ENCODE measurements at regions of chr1 and their contacts with region 1.

Region 1: GRCh38 chr1:185670187-185670627 is 64.0 kb upstream of the HMCN1 start:
- DNase-seq: peak; percentile 28
- H3K4me3 Mint-ChIP-seq: no peak overlapping the region
- H3K27ac Mint-ChIP-seq: no peak overlapping the region
- H3K4me1 Mint-ChIP-seq: peaks cover 39% of the 10 kb centered on the region
- H3K27me3 Mint-ChIP-seq: peaks cover 2% of the 10 kb centered on the region

Region 2: DNA sequence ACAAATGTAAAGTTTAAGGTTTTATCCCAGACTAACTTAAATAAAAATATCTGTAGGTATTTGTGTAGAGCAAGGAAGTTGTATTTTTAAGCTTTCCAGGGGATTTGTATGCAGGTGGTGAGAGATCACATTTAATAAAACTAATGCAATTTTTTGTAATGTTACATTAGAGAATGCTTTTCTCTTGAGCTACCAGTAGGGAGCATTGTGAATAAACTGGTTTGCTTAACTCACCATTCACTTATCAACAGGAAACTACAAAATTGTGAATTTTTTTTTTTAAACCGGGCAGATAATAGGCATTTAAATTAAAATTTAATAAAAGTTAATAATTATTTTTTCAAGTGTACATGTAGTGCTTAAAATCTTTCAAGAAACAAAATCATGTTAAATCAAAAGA is 431.8 kb before region 1 on chr1:
- intact Hi-C with region 1: loop called (anchors 1 kb)
- DNase-seq: no peak
- H3K4me3 Mint-ChIP-seq: no peak overlapping the region
- H3K27ac Mint-ChIP-seq: no peak overlapping the region
- H3K4me1 Mint-ChIP-seq: peaks cover 15% of the 10 kb centered on the region
- H3K27me3 Mint-ChIP-seq: peaks cover 4% of the 10 kb centered on the region

Region 3: DNA sequence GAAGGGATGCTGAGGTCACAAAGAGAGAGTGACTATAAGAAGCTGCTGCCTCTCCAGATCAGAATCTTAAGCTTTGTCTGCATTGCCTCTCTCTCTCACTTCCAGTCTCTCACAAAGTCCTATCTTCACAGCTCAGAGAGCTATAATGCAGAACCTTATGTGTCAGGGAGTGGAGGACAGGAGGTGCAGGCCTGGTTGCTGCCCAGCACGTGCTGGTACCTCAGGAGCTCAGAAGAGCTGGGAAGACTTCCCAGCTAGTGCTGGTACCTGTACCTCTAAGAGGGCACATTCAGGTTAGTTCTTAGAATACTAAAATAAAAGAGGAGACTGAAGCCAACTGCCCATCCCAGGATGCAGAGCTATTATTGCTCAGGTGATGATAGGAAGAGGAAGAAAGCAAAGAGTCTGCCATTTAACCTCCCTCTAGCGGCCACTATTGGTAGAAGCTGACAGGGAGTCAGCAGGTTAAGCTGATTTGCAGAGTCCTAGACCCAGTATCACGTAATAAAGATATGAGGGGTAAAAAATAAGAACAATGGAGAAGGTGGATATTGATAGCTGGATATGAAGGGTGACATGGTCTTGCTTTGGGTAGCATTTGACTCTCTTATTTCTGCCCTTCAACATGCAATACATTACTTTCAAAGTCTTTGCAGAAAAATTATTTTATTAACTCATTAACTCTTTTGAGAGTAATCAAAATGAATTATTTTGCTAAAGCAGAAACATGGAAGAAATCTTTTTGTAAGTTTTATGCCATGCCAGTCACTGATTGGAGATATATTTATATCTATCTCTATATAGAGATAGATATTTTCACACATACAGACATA is 74.2 kb before region 1 on chr1:
- intact Hi-C with region 1: loop called (anchors 5 kb)
- DNase-seq: peak; percentile 26
- H3K4me3 Mint-ChIP-seq: no peak overlapping the region
- H3K27ac Mint-ChIP-seq: peak overlapping the region; percentile 42
- H3K4me1 Mint-ChIP-seq: peaks cover 26% of the 10 kb centered on the region
- H3K27me3 Mint-ChIP-seq: no peaks in the 10 kb centered on the region

Region 4: DNA sequence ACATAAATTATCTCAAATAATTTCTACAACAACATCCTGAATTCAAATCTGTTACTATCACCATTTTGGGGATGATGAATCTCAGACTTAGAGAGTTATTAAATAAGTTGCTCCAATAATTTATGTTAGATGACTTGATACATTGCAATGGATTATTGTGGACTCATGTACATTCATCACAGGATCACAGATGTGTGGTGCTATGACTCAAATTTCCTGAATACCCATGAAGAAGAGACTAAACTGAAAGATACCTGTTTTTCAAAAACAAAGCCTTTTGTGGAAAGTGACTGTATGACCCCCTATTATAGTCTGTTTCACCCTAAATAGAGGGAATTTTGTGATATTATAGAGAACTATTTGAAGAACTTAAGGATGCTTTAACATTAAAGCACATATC is 1473.6 kb after region 1 on chr1:
- intact Hi-C with region 1: no loop called
- DNase-seq: no peak
- H3K4me3 Mint-ChIP-seq: no peak overlapping the region
- H3K27ac Mint-ChIP-seq: no peak overlapping the region
- H3K4me1 Mint-ChIP-seq: no peaks in the 10 kb centered on the region
- H3K27me3 Mint-ChIP-seq: no peaks in the 10 kb centered on the region